MCF 10A (cell line): ENCODE measurements at regions of chr1 and their contacts with region 1.

Region 1: DNA sequence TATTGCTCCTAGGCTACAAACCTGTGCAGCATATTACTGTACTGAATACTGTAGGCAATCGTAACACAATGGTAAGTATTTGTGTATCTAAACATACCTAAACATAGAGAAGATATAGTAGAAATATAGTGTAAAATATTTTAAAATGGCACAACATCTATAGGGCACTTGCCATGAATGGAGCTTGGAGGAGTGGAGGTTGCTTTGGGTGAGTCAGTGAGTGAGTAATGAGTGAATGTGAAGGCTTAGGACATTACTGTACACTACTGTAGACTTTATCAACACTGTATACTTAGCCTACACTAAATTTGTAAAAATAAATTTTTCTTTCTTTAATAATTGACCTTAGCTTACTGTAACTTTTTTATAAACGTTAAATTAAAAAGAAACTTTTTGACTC is 7.9 kb downstream of the LEFTY2 start:
- DNase-seq: peak; percentile 74
- H3K4me3 Mint-ChIP-seq: no peak overlapping the region
- H3K27ac Mint-ChIP-seq: no peak overlapping the region
- H3K4me1 Mint-ChIP-seq: peaks cover 15% of the 10 kb centered on the region
- H3K27me3 Mint-ChIP-seq: no peaks in the 10 kb centered on the region
- CTCF ChIP-seq: no peak

Region 2: GRCh38 chr1:225977937-225978748 is 45.1 kb after region 1 on chr1:
- CTCF ChIA-PET with region 1: interaction called, 16 read pairs
- POLR2A ChIA-PET with region 1: interaction called, 3 read pairs
- intact Hi-C with region 1: no loop called
- DNase-seq: no peak
- H3K4me3 Mint-ChIP-seq: no peak overlapping the region
- H3K27ac Mint-ChIP-seq: no peak overlapping the region
- H3K4me1 Mint-ChIP-seq: peaks cover 5% of the 10 kb centered on the region
- H3K27me3 Mint-ChIP-seq: no peaks in the 10 kb centered on the region
- CTCF ChIP-seq: no peak